Endothelial cell of umbilical vein (primary cell): ENCODE measurements at regions of chr1 and their contacts with region 1.

Region 1: GRCh38 chr1:2412519-2413233 is at the start of gene PEX10:
- DNase-seq: peak; percentile 95
- H3K4me3 ChIP-seq: peak within 1 kb of the TSS; percentile 57 to 85 (median 71)
- H3K27ac ChIP-seq: peak within 1 kb of the TSS; percentile 57
- H3K4me1 ChIP-seq: peaks cover 10% of the 10 kb centered on the region
- H3K27me3 ChIP-seq: no peaks in the 10 kb centered on the region
- CTCF ChIP-seq: no peak
- POLR2A ChIP-seq: peak; percentile 53
- total RNA-seq, gene PEX10: 23.0 and 26.7 TPM in 2 replicates

Region 2: GRCh38 chr1:2391041-2391930 is 21.4 kb before region 1 on chr1 and contains the starts of genes MORN1 and RER1:
- CTCF ChIA-PET with region 1: no interaction called
- POLR2A ChIA-PET with region 1: no interaction called
- dilution Hi-C with region 1: no loop called
- intact Hi-C with region 1: loop called (anchors 1 kb)
- DNase-seq: peak; percentile 100
- H3K4me3 ChIP-seq: peak within 1 kb of the TSS; percentile 80 to 92 (median 88)
- H3K27ac ChIP-seq: peak within 1 kb of the TSS; percentile 77
- H3K4me1 ChIP-seq: peaks cover 16% of the 10 kb centered on the region
- H3K27me3 ChIP-seq: no peaks in the 10 kb centered on the region
- CTCF ChIP-seq: no peak
- POLR2A ChIP-seq: peak; percentile 55
- total RNA-seq, gene MORN1: 6.4 and 6.5 TPM in 2 replicates
- total RNA-seq, gene RER1: 174 and 179 TPM in 2 replicates

Region 3: DNA sequence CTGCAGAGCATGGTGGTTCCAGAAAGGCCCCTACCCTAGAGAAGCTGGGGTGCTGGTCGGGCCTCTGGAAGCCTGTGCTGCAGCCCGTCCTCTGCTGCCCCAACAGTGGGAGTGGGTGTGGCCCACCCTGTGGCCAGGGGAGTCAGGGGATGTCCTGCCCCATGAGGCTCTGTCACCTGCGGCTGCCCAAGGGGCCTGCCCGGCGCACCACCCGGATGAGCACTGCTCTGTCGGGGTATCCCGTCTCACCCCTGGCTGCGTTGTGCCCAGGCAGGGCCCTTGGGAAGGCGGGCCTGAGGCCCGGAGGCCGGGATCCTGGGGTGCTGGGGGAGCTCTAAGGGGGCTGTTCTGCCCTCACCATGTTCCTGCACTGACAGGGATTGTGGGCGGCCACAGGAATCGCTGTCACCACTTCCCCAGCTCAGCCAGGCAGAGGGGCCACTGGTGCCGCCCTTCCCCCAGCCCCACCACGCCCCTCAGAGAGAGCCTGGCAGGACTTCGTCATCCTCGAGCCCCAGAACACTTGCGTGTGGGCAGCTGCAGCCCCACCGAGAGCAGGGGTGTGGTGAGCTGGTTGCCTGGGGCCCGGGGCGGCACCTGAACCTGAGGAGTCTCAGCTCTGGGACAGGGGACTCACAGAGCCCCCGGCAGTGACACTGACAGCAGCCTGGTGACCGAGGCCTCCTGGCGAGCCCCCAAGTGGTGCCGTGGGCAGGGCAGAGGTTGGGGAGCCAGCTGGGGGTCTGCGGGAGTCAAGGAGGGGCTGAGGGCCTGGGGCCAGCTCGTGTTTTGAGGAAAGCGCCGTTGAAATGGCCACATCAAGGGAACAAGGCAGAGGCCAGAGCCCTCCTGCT is 93.6 kb after region 1 on chr1:
- CTCF ChIA-PET with region 1: no interaction called
- POLR2A ChIA-PET with region 1: no interaction called
- dilution Hi-C with region 1: no loop called
- intact Hi-C with region 1: loop called (anchors 5 kb)
- DNase-seq: no peak
- H3K4me3 ChIP-seq: no peak overlapping the region
- H3K27ac ChIP-seq: no peak overlapping the region
- H3K4me1 ChIP-seq: no peaks in the 10 kb centered on the region
- H3K27me3 ChIP-seq: no peaks in the 10 kb centered on the region
- CTCF ChIP-seq: no peak
- POLR2A ChIP-seq: no peak

Region 4: GRCh38 chr1:2545759-2546514 is 133.3 kb after region 1 on chr1:
- CTCF ChIA-PET with region 1: interaction called, 20 read pairs
- POLR2A ChIA-PET with region 1: no interaction called
- dilution Hi-C with region 1: no loop called
- intact Hi-C with region 1: loop called (anchors 1 kb)
- DNase-seq: peak; percentile 84
- H3K4me3 ChIP-seq: peak overlapping the region; percentile 51 to 74 (median 67)
- H3K27ac ChIP-seq: peak overlapping the region; percentile 80
- H3K4me1 ChIP-seq: peaks cover 27% of the 10 kb centered on the region
- H3K27me3 ChIP-seq: peaks cover 0 to 1% of the 10 kb centered on the region in 2 experiments
- CTCF ChIP-seq: no peak
- POLR2A ChIP-seq: peak; percentile 78

Region 5: GRCh38 chr1:2586154-2587070 is 173.7 kb after region 1 on chr1 and contains the start of gene PRXL2B:
- CTCF ChIA-PET with region 1: interaction called, 3 read pairs
- POLR2A ChIA-PET with region 1: no interaction called
- dilution Hi-C with region 1: no loop called
- intact Hi-C with region 1: loop called (anchors 1 kb)
- DNase-seq: peak; percentile 98
- H3K4me3 ChIP-seq: peak within 1 kb of the TSS; percentile 56 to 73 (median 61)
- H3K27ac ChIP-seq: peak within 1 kb of the TSS; percentile 75
- H3K4me1 ChIP-seq: peaks cover 15% of the 10 kb centered on the region
- H3K27me3 ChIP-seq: no peaks in the 10 kb centered on the region
- CTCF ChIP-seq: no peak
- POLR2A ChIP-seq: peak; percentile 33
- total RNA-seq, gene PRXL2B: 55.8 and 56.8 TPM in 2 replicates

Region 6: DNA sequence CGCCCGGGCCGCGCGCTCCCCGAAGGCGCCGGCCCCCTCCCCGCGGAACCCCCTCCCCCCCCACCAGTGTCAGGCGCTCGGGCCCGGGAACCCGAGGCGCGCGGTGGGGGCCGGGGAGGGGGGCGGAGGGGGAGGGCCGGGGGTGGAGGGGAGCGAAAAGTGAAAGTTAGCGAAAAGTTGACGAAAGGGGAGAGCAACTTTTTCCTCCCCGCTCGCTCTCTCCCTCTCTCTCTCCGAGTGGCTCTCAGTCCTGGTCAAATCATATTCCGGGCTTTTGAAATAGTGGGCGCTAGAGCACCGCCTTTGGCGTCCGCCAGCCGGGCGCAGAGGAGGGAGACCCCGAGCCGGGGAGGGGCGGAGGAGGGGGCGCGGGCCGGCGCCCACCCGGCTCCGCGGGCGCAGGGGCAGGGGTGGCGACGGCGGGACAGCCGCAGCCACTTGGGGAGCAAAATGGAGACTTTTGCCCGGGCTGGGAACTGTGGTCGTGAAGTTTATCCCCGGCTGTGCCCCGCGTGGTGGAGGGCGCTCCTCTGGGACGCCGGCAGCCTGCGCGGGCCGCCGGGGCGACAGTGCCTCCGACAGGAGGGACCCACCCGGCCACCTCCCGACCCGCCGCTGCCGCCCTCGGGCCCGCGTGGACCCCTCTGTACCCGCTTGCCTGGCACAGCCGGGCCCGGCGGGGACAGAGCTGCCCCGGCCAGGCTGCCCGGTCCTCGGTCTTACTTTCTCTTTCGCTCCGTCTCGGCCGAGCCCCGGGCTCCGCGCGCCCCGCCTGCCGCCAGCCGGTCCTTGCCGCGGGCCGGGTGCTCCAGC is 657.0 kb after region 1 on chr1:
- CTCF ChIA-PET with region 1: no interaction called
- POLR2A ChIA-PET with region 1: no interaction called
- dilution Hi-C with region 1: no loop called
- intact Hi-C with region 1: loop called (anchors 5 kb)
- DNase-seq: peak; percentile 17
- H3K4me3 ChIP-seq: peak overlapping the region; percentile 38 to 54 (median 41)
- H3K27ac ChIP-seq: no peak overlapping the region
- H3K4me1 ChIP-seq: no peaks in the 10 kb centered on the region
- H3K27me3 ChIP-seq: peaks cover 60 to 77% of the 10 kb centered on the region in 2 experiments
- CTCF ChIP-seq: peak in 1 of 2 donors; percentile 5
- POLR2A ChIP-seq: no peak

Region 7: DNA sequence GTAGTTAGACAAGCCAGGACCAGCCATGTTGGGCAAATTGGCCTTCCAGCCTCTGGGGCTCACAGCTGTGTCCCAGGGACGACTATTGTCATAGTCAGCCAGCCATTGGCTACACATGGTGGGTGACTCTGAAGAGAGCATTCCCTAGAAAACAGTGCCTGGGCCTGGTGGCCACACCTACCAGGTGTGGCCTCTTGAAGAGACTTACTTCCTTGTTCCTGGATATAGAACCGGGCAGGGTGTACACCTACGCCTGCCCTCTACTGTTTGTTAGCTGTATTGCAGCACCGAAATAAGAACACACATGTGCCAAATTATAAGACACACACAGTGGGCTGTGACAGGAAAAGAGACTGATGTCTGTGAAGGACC is 907.2 kb after region 1 on chr1:
- CTCF ChIA-PET with region 1: interaction called, 4 read pairs
- POLR2A ChIA-PET with region 1: no interaction called
- dilution Hi-C with region 1: no loop called
- intact Hi-C with region 1: loop called (anchors 1 kb)
- DNase-seq: peak; percentile 32
- H3K4me3 ChIP-seq: no peak overlapping the region
- H3K27ac ChIP-seq: no peak overlapping the region
- H3K4me1 ChIP-seq: no peaks in the 10 kb centered on the region
- H3K27me3 ChIP-seq: peaks cover 0 to 7% of the 10 kb centered on the region in 2 experiments
- CTCF ChIP-seq: peak; percentile 44 to 49
- POLR2A ChIP-seq: no peak